ENCODE measurements at regions of chr18 and their contacts with region 1.

Region 1: GRCh38 chr18:7272311-7273049 is 41.6 kb downstream of the LRRC30 start:
- DNase-seq: peak; percentile 46 to 62
- H3K4me3 ChIP-seq: no peak overlapping the region
- H3K27ac ChIP-seq: no peak overlapping the region
- H3K4me1 ChIP-seq: peaks cover 0 to 5% (median 0%) of the 10 kb centered on the region in 4 experiments; a peak in 1 of 7 replicates
- H3K27me3 ChIP-seq: no peaks in the 10 kb centered on the region
- CTCF ChIP-seq: peak; percentile 58 to 72 (median 62)
- EP300 ChIP-seq: no peak
- POLR2A ChIP-seq: no peak
- RAD21 ChIP-seq: peak; percentile 81 to 85

Region 2: GRCh38 chr18:7259475-7260081 is 12.9 kb before region 1 on chr18:
- CTCF ChIA-PET with region 1: interaction called, 19 read pairs
- POLR2A ChIA-PET with region 1: no interaction called
- DNase-seq: no peak
- H3K4me3 ChIP-seq: no peak overlapping the region
- H3K27ac ChIP-seq: no peak overlapping the region
- H3K4me1 ChIP-seq: peaks cover 0 to 6% (median 0%) of the 10 kb centered on the region in 4 experiments; a peak in 1 of 7 replicates
- H3K27me3 ChIP-seq: no peaks in the 10 kb centered on the region
- CTCF ChIP-seq: no peak
- EP300 ChIP-seq: no peak
- POLR2A ChIP-seq: no peak
- RAD21 ChIP-seq: no peak

Region 3: DNA sequence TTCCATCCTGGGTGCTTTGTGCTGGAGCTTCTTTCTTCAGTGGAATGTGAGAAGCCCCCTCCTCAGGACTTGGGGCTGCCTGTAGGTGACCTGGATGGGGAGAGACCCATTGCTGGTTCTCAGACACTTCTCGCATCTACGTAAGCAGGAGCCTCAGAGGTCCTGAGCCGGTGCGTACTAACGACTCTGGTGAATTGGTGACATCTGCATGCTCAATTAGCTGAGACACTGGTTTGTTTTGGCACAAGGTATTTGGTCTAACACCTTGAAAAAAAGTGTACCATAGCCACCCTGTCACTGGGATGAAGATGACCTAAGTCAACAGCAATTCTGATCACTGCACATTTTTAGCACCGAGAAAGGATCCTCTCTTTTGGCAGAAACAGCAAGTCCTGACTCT is 16.1 kb after region 1 on chr18:
- CTCF ChIA-PET with region 1: interaction called, 13 read pairs
- POLR2A ChIA-PET with region 1: no interaction called
- DNase-seq: no peak
- H3K4me3 ChIP-seq: no peak overlapping the region
- H3K27ac ChIP-seq: no peak overlapping the region
- H3K4me1 ChIP-seq: no peaks in the 10 kb centered on the region
- H3K27me3 ChIP-seq: no peaks in the 10 kb centered on the region
- CTCF ChIP-seq: no peak
- EP300 ChIP-seq: no peak
- POLR2A ChIP-seq: no peak
- RAD21 ChIP-seq: no peak

Region 4: GRCh38 chr18:7369006-7369405 is 96.5 kb after region 1 on chr18:
- CTCF ChIA-PET with region 1: interaction called, 21 read pairs
- POLR2A ChIA-PET with region 1: no interaction called
- DNase-seq: no peak
- H3K4me3 ChIP-seq: no peak overlapping the region
- H3K27ac ChIP-seq: no peak overlapping the region
- H3K4me1 ChIP-seq: no peaks in the 10 kb centered on the region; a peak in 2 of 7 replicates
- H3K27me3 ChIP-seq: no peaks in the 10 kb centered on the region
- CTCF ChIP-seq: no peak
- EP300 ChIP-seq: no peak
- POLR2A ChIP-seq: no peak
- RAD21 ChIP-seq: no peak

Region 5: GRCh38 chr18:7452331-7452730 is 179.9 kb after region 1 on chr18:
- CTCF ChIA-PET with region 1: interaction called, 19 read pairs
- POLR2A ChIA-PET with region 1: no interaction called
- DNase-seq: peak; percentile 38 to 71
- H3K4me3 ChIP-seq: no peak overlapping the region
- H3K27ac ChIP-seq: no peak overlapping the region
- H3K4me1 ChIP-seq: no peaks in the 10 kb centered on the region; a peak in 1 of 7 replicates
- H3K27me3 ChIP-seq: no peaks in the 10 kb centered on the region
- CTCF ChIP-seq: peak; percentile 61 to 82 (median 82)
- EP300 ChIP-seq: no peak
- POLR2A ChIP-seq: no peak
- RAD21 ChIP-seq: peak; percentile 63 to 69

Region 6: DNA sequence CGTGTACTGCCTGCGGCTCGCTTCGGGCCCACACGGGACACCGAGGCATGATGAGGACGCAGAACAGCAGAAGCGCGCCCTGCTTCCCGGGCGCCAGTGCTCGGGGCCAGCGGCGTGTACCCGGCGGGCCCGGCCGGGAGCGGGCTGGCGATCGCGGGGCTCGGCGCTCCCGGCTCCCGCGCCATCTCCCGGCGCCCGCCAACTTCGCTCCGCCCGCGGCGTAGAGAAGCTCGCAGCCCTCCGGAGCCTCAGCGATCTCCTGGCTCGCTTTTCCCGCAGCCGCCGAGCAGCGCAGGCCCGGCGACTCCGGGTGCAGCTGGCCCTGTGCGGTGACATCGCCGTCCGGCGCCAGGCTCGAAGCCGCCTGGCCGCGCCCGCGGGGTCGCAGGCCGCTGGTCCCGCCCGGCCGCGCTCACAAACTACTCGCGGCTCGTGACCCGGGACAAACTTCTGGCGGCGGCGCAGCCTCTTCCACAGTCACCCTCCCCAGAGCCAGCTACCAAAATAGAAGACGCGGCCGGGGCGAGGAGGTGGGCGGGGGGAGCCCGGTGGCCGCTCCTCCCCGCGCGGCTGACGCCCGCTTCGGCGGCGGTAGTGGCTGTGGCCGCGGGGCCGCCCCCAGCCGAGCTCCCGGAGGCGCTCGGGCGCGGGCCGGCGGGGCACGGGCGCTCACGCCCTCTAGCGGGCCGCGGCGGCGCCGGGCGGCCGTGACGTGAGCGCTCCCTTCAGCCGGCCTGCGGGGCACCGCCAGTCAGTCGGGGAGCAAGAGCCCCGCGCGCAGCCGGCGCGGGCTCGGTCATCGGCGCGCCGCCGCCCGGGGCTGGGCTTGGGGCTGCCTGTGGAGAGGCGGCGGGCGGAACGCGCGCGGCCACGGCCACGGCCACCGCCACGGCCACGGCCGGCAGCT is 294.3 kb after region 1 on chr18 and contains the start of gene PTPRM:
- CTCF ChIA-PET with region 1: interaction called, 31 read pairs
- POLR2A ChIA-PET with region 1: no interaction called
- DNase-seq: peak in 1 of 2 experiments; percentile 75
- H3K4me3 ChIP-seq: peak within 1 kb of the TSS; percentile 46 to 97 (median 67)
- H3K27ac ChIP-seq: no peak within 1 kb of the TSS
- H3K4me1 ChIP-seq: peaks cover 0 to 3% (median 1%) of the 10 kb centered on the region in 4 experiments; a peak in 2 of 7 replicates
- H3K27me3 ChIP-seq: peaks cover 4 to 36% (median 27%) of the 10 kb centered on the region in 4 experiments
- CTCF ChIP-seq: peak; percentile 35 to 71 (median 59)
- EP300 ChIP-seq: no peak
- POLR2A ChIP-seq: no peak
- RAD21 ChIP-seq: peak; percentile 29 to 69; a peak in 3 of 4 replicates
- total RNA-seq, gene PTPRM: 4.1 and 5.7 TPM in 2 replicates